ENCODE measurements at regions of chr6 and their contacts with region 1.

Region 1: DNA sequence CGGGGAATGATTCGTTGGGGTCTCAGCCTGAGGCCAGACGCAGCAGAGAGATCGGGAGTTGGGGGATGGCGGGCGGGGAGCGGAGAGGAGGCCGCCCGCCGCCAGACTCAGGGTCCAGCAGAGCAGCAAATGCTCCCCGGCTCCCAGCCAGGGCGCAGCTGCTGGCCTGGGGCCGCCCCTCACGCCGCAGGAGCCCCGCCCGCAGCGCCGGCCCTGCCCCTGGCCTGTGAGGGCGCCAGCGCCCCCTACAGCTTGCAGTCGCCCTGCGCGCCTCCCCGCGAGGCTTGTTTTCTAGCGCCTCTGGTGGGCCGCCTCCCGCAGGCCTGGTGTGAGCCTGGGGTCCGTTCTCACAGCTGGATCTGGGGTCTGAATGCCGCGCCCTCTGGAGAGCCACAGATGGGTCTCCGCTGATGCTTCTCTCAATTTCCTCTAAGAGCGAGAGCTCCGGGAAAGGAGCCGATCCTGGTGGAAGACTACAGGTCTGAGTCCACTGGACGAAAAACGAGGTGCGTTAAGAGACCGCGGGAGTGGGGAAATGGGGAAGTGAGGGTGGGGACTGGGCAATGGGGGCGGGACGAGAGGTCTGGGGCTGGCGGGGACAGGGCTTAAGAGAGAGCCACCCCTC is 29.9 kb downstream of the TRIM38 start:
- DNase-seq: peak; percentile 99
- ATAC-seq: peak; percentile 89
- H3K4me3 Mint-ChIP-seq: peak overlapping the region; percentile 99
- H3K27ac Mint-ChIP-seq: peak overlapping the region; percentile 99
- H3K4me1 Mint-ChIP-seq: peaks cover 50% of the 10 kb centered on the region
- H3K27me3 Mint-ChIP-seq: no peaks in the 10 kb centered on the region
- CTCF ChIP-seq: peak; percentile 73

Region 2: GRCh38 chr6:25617997-25618396 is 374.5 kb before region 1 on chr6:
- CTCF ChIA-PET with region 1: no interaction called
- POLR2A ChIA-PET with region 1: no interaction called
- intact Hi-C with region 1: loop called (anchors 5 kb)
- DNase-seq: no peak
- ATAC-seq: peak; percentile 28
- H3K4me3 Mint-ChIP-seq: no peak overlapping the region
- H3K27ac Mint-ChIP-seq: no peak overlapping the region
- H3K4me1 Mint-ChIP-seq: peaks cover 14% of the 10 kb centered on the region
- H3K27me3 Mint-ChIP-seq: peaks cover 3% of the 10 kb centered on the region
- CTCF ChIP-seq: no peak

Region 3: DNA sequence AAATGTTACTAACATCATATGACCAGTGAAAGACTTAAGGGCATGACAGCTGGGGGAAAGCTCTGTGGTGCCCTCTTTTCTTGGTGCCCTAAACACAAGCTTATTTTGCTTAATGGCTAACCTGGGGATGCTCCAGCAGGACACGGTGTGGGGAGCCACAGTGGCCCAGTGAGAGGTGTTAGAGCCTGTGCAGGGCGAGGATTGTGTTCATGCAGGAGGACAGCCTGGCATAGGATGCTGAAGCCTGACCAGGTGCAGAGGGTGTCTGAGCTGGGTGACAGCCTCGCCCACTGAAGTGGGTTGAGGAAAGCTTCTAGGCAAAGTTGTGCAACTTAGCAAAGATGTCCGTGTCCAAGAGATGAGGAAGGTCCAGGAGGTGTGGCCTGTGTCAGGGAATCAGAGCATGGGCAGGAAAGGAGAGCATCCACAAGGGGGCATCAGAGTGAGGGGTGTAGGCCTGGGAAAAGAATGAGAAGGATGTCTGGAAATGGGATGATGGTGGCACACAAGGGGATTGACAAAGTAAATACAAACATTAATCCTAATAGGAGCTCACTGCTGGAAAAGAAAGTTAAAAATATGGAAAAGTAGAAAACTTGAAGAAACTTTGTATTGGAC is 204.1 kb before region 1 on chr6:
- CTCF ChIA-PET with region 1: interaction called, 37 read pairs
- POLR2A ChIA-PET with region 1: interaction called, 5 read pairs
- intact Hi-C with region 1: loop called (anchors 1 kb)
- DNase-seq: no peak
- ATAC-seq: peak; percentile 50
- H3K4me3 Mint-ChIP-seq: no peak overlapping the region
- H3K27ac Mint-ChIP-seq: no peak overlapping the region
- H3K4me1 Mint-ChIP-seq: no peaks in the 10 kb centered on the region
- H3K27me3 Mint-ChIP-seq: peaks cover 3% of the 10 kb centered on the region
- CTCF ChIP-seq: no peak

Region 4: GRCh38 chr6:25971187-25971811 is 21.2 kb before region 1 on chr6:
- CTCF ChIA-PET with region 1: interaction called, 8 read pairs
- POLR2A ChIA-PET with region 1: interaction called, 31 read pairs
- intact Hi-C with region 1: loop called (anchors 2 kb)
- DNase-seq: no peak
- ATAC-seq: no peak
- H3K4me3 Mint-ChIP-seq: no peak overlapping the region
- H3K27ac Mint-ChIP-seq: peak overlapping the region; percentile 30
- H3K4me1 Mint-ChIP-seq: peaks cover 84% of the 10 kb centered on the region
- H3K27me3 Mint-ChIP-seq: no peaks in the 10 kb centered on the region
- CTCF ChIP-seq: no peak

Region 5: DNA sequence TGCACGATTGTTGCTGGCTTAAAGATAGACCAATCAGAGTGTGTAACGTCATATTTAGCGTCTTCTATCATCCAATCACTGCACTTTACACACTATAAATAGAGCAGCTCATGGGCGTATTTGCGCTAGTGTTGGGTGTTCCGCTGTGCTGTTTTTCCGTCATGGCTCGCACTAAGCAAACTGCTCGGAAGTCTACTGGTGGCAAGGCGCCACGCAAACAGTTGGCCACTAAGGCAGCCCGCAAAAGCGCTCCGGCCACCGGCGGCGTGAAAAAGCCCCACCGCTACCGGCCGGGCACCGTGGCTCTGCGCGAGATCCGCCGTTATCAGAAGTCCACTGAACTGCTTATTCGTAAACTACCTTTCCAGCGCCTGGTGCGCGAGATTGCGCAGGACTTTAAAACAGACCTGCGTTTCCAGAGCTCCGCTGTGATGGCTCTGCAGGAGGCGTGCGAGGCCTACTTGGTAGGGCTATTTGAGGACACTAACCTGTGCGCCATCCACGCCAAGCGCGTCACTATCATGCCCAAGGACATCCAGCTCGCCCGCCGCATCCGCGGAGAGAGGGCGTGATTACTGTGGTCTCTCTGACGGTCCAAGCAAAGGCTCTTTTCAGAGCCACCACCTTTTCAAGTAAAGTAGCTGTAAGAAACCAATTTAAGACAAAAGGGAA is 27.9 kb after region 1 on chr6:
- CTCF ChIA-PET with region 1: interaction called, 44 read pairs
- POLR2A ChIA-PET with region 1: interaction called, 147 read pairs
- intact Hi-C with region 1: loop called (anchors 1 kb)
- DNase-seq: peak; percentile 71
- ATAC-seq: peak; percentile 51
- H3K4me3 Mint-ChIP-seq: peak overlapping the region; percentile 96
- H3K27ac Mint-ChIP-seq: peak overlapping the region; percentile 99
- H3K4me1 Mint-ChIP-seq: peaks cover 29% of the 10 kb centered on the region
- H3K27me3 Mint-ChIP-seq: no peaks in the 10 kb centered on the region
- CTCF ChIP-seq: no peak

Region 6: DNA sequence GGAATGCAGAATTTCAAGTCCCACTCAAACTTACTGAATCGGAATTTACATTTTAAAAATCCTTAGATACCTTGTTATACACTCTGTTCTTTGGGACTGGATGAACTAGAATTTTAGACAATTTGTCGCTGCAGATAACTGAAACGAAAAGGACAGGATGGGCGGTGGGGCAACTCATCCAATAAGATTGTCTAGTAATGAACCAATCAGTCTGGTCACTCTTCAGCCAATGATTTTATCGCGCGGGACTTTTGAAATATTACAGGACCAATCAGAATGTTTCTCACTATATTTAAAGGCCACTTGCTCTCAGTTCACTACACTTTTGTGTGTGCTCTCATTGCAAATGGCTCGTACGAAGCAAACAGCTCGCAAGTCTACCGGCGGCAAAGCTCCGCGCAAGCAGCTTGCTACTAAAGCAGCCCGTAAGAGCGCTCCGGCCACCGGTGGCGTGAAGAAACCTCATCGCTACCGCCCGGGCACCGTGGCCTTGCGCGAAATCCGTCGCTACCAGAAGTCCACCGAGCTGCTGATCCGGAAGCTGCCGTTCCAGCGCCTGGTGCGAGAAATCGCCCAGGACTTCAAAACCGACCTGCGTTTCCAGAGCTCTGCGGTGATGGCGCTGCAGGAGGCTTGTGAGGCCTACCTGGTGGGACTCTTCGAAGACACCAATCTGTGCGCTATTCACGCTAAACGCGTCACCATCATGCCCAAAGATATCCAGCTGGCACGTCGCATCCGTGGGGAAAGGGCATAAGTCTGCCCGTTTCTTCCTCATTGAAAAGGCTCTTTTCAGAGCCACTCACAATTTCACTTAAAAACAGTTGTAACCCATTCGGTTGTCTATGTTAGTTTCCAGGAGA is 52.8 kb after region 1 on chr6:
- CTCF ChIA-PET with region 1: no interaction called
- POLR2A ChIA-PET with region 1: interaction called, 13 read pairs
- intact Hi-C with region 1: loop called (anchors 2 kb)
- DNase-seq: peak; percentile 51
- ATAC-seq: peak; percentile 58
- H3K4me3 Mint-ChIP-seq: peak overlapping the region; percentile 91
- H3K27ac Mint-ChIP-seq: peak overlapping the region; percentile 99
- H3K4me1 Mint-ChIP-seq: peaks cover 24% of the 10 kb centered on the region
- H3K27me3 Mint-ChIP-seq: no peaks in the 10 kb centered on the region
- CTCF ChIP-seq: no peak

Region 7: GRCh38 chr6:26141378-26141904 is 148.9 kb after region 1 on chr6:
- CTCF ChIA-PET with region 1: no interaction called
- POLR2A ChIA-PET with region 1: no interaction called
- intact Hi-C with region 1: no loop called
- DNase-seq: no peak
- ATAC-seq: no peak
- H3K4me3 Mint-ChIP-seq: no peak overlapping the region
- H3K27ac Mint-ChIP-seq: no peak overlapping the region
- H3K4me1 Mint-ChIP-seq: peaks cover 7% of the 10 kb centered on the region
- H3K27me3 Mint-ChIP-seq: no peaks in the 10 kb centered on the region
- CTCF ChIP-seq: no peak

Measured in activated B cell treated with CpG ODN at 0.5 μM for 24 hours (primary cell).